Heart right ventricle (tissue), 16 donors: ENCODE measurements at regions of chr1 and their contacts with region 1.

Region 1: DNA sequence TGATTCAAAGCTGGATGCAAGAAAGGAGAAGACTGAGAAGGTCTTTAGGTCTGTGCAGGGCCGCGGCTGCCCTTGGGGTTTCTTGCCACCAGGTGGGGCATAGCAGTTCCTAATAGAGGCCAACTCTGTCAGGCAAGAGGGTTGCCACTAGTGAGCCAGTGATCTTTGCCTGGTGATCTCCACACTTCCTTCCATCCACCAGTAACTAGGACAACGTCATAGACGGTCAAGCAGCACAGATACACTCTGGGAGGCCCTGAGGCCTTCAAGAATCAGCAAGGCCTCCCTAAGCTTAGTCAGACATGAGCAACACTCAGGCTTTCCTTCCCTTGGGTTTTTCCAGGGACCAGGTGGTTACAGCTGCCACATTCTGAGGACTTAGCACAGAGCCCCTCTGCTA is 32.9 kb upstream of the ATP2B4 start:
- DNase-seq: peak in 1 of 2 donors; percentile 24
- ATAC-seq: peak in 3 of 8 donors; percentile 13 to 61 (median 46)
- H3K4me3 ChIP-seq: no peak overlapping the region
- H3K27ac ChIP-seq: no peak overlapping the region
- H3K4me1 ChIP-seq: peaks cover 9 to 41% (median 32%) of the 10 kb centered on the region in 9 donors
- H3K27me3 ChIP-seq: no peaks in the 10 kb centered on the region
- CTCF ChIP-seq: peak in 5 of 9 donors; percentile 20 to 39 (median 24)

Region 2: GRCh38 chr1:203558064-203558760 is 35.5 kb before region 1 on chr1:
- intact Hi-C with region 1: loop called in 6 of 10 experiments (anchors 2 to 5 kb)
- DNase-seq: peak; percentile 41 to 60
- ATAC-seq: peak; percentile 35 to 71 (median 58)
- H3K4me3 ChIP-seq: peak overlapping the region in 4 of 10 donors; percentile 14 to 18 (median 16)
- H3K27ac ChIP-seq: peak overlapping the region; percentile 53 to 98 (median 91)
- H3K4me1 ChIP-seq: peaks cover 22 to 71% (median 48%) of the 10 kb centered on the region in 9 donors
- H3K27me3 ChIP-seq: no peaks in the 10 kb centered on the region
- CTCF ChIP-seq: no peak

Region 3: DNA sequence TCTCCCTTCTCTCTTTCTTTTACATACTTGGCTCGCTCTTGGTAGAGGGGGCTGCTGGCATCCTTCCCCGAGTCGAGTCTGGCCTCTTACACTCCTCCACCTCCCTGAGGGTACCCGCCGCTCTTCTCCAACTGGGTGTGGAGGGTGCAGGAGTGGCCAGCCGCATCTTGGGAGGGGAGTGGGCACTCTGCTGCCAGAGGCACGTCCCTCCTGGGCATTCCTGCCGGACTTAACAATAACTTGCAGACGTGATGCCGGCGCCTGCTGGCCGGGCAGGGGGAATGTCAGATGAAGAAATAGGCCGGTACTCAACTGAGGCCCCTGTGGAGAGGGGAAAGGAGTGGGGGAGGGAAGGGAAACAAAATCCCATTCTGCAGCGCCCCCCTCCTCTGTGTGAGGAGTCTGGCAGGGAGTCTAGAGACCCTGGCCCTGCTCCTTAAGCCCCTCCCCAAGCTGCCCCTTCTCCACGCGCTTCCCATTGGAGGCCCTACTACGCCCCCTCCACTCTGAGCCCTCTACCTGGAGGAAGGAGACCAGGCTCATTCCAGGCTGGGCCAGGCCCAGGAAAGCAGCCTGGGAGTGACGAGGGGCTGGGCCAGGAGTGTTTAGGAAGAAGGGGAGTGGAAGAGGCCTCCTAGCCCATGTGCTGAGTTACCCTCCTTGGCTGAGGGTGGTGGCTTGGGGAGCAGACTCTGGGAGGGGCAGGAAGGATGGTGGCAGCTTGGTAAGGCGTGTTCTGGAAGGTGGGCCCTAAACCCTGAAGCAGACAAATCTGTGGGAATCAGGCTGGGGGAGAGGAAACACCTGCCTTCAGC is 34.7 kb after region 1 on chr1:
- intact Hi-C with region 1: no loop called
- DNase-seq: peak; percentile 29 to 37
- ATAC-seq: peak; percentile 1 to 31 (median 12)
- H3K4me3 ChIP-seq: peak overlapping the region; percentile 64 to 88 (median 80)
- H3K27ac ChIP-seq: peak overlapping the region; percentile 63 to 97 (median 89)
- H3K4me1 ChIP-seq: peaks cover 17 to 71% (median 54%) of the 10 kb centered on the region in 9 donors
- H3K27me3 ChIP-seq: no peaks in the 10 kb centered on the region
- CTCF ChIP-seq: peak in 6 of 9 donors; percentile 6 to 33 (median 8)

Region 4: GRCh38 chr1:203649999-203650855 is 56.5 kb after region 1 on chr1:
- intact Hi-C with region 1: no loop called
- DNase-seq: peak in 1 of 2 donors; percentile 70
- ATAC-seq: peak; percentile 77 to 85 (median 81)
- H3K4me3 ChIP-seq: peak overlapping the region in 9 of 10 donors; percentile 1 to 43 (median 36)
- H3K27ac ChIP-seq: peak overlapping the region in 9 of 10 donors; percentile 16 to 74 (median 56)
- H3K4me1 ChIP-seq: peaks cover 11 to 98% (median 80%) of the 10 kb centered on the region in 9 donors
- H3K27me3 ChIP-seq: no peaks in the 10 kb centered on the region
- CTCF ChIP-seq: peak in 1 of 9 donors; percentile 17

Region 5: DNA sequence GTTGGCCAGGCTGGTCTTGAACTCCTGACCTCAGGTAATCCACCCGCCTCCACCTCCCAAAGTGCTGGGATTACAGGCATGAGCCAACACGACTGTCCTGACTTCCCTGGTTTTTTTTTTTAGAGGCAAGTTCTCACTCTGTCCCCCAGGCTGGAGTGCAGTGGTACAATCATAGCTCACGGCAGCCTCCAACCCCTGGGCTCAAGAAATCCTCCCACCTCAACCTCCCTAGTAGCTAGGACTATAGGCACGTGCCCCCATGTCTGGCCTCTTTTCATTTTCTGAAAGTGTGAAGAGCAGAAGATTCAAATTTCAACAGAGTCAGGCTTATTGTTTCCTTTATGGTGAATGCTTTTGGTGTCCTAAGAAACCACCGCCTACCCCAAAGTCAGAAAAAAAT is 457.5 kb after region 1 on chr1:
- intact Hi-C with region 1: no loop called
- DNase-seq: no peak
- ATAC-seq: no peak
- H3K4me3 ChIP-seq: no peak overlapping the region
- H3K27ac ChIP-seq: no peak overlapping the region
- H3K4me1 ChIP-seq: no peaks in the 10 kb centered on the region
- H3K27me3 ChIP-seq: no peaks in the 10 kb centered on the region
- CTCF ChIP-seq: no peak